Cardiac septum (tissue), 1 donor: ENCODE measurements at regions of chr3 and their contacts with region 1.

Region 1: DNA sequence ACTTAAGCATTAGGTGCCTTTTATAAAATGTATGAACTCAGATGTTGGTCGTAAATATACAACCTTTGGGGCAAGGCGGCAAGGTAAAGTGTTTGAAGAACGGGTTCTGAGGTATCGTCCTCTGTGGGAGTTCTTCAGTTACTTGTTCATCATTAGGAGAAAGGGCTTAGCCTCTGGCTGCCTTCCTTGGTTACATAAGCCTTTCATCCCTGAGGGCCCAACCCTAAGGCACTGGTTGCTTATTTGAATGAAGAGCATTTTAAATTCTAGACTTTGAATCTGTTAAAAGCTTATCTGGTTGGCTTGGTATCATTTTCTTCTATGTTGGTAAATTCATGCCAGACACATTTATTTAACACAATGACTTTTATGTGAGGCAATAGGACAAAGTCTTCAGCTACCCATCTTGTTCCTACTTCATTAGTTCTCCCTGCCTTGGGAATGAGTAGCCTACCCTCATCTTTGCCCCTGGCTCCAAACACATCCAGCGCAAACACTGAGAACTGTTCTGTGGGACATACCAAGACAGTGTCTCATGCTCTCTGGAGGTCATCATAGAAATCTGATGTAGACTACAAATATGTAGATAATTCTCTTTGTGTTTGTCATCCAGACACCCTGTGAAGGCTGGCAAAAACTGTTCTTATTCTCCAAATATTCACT is 12.4 kb upstream of the CCDC80 start:
- DNase-seq: no peak

Region 2: GRCh38 chr3:112519424-112520001 is 133.8 kb before region 1 on chr3:
- intact Hi-C with region 1: no loop called
- DNase-seq: no peak

Region 3: DNA sequence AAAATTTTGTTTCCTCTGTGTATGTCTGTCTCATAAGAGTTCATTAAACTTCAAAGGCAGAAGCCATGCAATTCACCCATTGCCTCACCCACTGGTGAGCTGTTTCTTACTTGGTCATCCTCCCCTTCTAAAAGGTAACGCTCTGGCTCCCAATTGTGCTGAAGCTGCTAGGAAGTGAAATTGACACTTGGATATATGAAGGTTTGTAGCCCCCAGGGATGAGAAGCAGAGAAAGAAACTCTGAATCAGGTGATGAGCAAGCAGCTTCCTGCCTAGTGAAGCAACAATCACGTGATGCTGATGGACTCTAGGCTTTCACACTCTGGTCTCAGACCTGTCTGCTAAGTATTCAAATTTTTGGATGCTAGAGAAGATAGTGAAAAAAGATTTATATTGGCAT is 122.7 kb after region 1 on chr3:
- intact Hi-C with region 1: loop called (anchors 5 kb)
- DNase-seq: no peak

Region 4: DNA sequence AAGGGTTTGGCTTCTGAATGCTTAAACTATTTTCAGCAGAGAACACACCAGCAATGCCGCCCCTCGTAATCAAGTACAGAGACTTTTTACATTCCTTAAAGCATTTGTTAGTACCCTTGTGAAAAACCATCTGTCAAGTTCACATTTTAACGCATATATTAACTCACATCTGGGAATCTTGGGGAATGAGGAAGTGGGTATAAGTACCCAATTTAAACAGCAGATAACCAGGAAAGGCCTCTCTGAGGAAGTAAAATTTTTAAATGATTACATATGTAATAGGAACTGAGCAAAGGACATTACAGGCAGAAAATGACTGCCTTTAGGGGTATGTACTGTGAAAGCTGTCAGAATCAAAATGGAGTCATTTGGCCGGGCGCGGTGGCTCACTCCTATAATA is 800.7 kb after region 1 on chr3:
- intact Hi-C with region 1: no loop called
- DNase-seq: no peak